ENCODE measurements at regions of chr11 and their contacts with region 1.

Region 1: DNA sequence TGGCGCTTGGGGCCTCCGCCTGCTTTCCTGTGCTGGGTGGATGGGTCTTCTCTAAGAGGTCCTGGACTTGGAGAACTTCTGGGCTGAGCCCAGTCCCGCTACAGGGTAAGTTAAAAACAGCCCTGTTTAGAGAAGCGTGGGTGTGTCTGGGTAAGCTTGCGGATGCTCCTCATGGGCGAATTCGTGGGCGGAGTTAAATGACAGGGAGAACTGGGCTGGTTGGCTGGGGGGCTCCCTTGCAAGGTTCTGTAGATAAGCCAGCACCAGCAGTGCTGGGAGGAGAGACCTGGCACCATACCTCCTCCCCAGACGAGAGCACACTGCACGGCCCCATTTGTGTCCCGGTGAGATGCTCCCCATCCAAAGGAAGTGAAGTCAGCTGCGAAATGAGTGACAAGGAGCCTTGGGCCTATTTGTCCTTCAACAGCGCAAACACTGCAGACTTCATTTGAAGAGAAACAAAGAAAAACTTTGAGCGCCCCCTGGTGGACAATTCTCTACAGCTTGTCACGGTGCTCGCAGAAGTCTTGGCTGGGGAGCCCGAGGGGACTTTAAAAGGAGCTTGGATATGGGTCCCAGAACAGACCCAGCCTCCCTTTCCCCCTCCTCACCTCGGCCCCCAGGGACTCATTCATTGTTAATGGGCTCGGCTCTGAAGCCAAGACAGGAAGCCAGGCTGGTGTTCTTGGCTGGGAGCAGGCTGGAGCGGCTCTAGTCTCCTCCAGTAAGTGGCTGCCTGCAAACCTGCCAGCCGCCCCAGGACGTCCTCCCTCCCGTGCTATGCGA is 39.5 kb downstream of the TP53I11 start:
- DNase-seq: peak; percentile 82
- CTCF ChIP-seq: peak; percentile 71

Region 2: DNA sequence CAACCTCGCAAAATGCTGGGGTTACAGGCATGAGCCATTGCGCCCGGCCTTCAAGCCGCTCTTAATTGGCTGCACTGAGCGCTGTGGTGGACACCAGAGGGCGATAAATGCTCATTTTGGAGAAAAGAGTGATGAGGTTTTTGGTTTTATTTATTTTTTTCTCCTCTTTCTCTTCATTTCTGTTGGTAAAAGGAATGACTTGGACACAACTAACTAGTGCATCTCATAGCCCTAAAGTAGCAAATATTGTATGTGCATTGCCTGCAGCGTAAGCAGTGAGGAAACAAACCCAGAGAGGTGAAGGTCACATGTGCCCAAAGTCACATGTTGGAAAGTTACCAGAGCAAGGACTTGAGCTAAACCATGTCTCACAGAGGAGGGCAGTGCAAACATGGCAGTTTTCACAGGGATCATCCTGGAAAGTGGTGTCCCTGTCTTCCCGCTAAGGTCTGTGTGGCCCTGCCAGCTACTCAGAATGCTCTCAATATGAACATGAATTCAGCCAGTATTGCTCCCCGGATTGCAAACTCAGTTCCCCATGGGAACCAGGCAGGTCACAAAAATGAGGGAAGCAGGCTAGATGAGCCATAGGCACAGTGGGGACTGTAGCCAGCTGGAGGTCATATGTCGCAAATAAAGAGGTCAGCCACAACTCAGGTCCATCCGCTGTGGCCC is 354.4 kb before region 1 on chr11:
- CTCF ChIA-PET with region 1: interaction called, 13 read pairs
- POLR2A ChIA-PET with region 1: no interaction called
- DNase-seq: no peak
- CTCF ChIP-seq: peak; percentile 88

Region 3: GRCh38 chr11:44621140-44621681 is 290.0 kb before region 1 on chr11:
- CTCF ChIA-PET with region 1: interaction called, 22 read pairs
- POLR2A ChIA-PET with region 1: no interaction called
- DNase-seq: peak; percentile 74
- CTCF ChIP-seq: peak; percentile 89

Region 4: DNA sequence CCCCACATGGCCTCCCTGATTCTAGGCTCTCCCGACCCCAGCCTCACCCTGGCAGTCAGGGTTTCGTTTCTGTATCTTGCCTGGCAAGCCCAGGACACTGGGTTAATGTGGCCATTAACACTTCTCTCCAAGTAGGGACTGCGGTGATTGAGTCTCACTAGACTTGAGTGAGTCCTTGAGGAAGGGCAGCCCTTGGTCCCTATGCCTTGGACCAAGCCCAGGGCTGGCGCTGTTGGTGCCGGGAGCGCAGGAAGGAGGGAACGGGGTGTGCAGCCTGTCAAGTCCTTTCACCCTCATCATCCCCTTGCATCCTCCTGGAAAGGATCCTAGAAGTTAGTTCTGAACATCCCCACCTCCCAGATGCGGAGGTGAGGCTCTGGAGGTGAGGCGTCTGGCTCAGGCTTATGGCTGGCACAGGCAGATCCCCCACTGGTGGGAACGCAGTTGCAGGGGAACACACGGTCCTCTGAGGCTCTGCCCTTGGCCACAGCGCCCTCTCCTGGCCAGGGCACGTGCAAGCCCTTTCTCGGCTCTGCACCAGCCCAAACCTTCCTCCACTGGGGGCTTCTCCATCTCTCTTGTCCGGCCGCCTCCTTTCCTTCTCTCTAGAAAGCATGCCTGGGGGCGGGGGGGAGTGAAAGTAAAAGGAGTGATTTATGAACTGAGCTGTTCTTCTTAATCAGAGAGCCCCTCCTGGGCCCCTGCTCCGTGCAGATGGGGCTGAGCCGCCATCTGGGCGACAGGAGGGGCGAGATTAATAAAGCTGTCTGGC is 17.2 kb before region 1 on chr11:
- CTCF ChIA-PET with region 1: interaction called, 16 read pairs
- POLR2A ChIA-PET with region 1: no interaction called
- DNase-seq: peak; percentile 78
- CTCF ChIP-seq: peak; percentile 82

Region 5: GRCh38 chr11:44899959-44900358 is 11.3 kb before region 1 on chr11:
- CTCF ChIA-PET with region 1: interaction called, 22 read pairs
- POLR2A ChIA-PET with region 1: no interaction called
- DNase-seq: no peak
- CTCF ChIP-seq: no peak

Region 6: DNA sequence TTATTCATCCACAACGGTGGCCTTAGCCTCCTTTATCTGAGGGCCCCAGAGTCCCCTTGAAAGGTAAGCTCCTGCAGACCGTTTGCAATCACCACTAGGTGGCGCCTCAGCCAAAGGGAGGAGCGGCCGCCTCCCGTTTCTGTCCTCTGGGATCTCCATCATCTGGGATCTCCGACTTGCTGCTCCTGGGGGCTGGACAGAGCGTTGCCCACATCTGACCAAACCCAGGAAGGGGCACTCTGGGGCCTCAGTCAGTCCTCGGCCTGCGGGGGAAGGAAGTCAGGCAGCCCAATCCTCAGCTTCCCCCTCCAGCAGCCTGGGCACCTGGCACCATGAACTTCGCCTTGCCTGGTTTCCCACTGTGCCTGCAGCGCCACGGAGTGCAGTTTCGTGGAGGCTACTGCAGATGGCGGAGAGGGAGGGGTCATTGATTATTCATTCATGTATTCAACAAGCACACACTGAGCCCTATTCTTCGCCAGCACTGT is 16.0 kb after region 1 on chr11:
- CTCF ChIA-PET with region 1: interaction called, 33 read pairs
- POLR2A ChIA-PET with region 1: no interaction called
- DNase-seq: peak; percentile 73
- CTCF ChIP-seq: peak; percentile 76

Region 7: GRCh38 chr11:45102810-45103621 is 191.8 kb after region 1 on chr11:
- CTCF ChIA-PET with region 1: interaction called, 13 read pairs
- POLR2A ChIA-PET with region 1: no interaction called
- DNase-seq: peak; percentile 77
- CTCF ChIP-seq: peak; percentile 91

Measured in GM10248 (cell line).